ENCODE measurements at regions of chr12 and their contacts with region 1.

Region 1: GRCh38 chr12:98374006-98374405 is 141.4 kb upstream of the TMPO start:
- DNase-seq: no peak
- H3K4me3 ChIP-seq: no peak overlapping the region
- CTCF ChIP-seq: peak; percentile 10

Region 2: GRCh38 chr12:98227162-98227561 is 146.8 kb before region 1 on chr12:
- CTCF ChIA-PET with region 1: interaction called, 17 read pairs
- POLR2A ChIA-PET with region 1: no interaction called
- DNase-seq: no peak
- H3K4me3 ChIP-seq: no peak overlapping the region
- CTCF ChIP-seq: peak; percentile 33

Region 3: GRCh38 chr12:98296462-98297079 is 77.4 kb before region 1 on chr12:
- CTCF ChIA-PET with region 1: no interaction called
- POLR2A ChIA-PET with region 1: no interaction called
- DNase-seq: no peak
- H3K4me3 ChIP-seq: no peak overlapping the region
- CTCF ChIP-seq: no peak